Prostate gland (tissue), 2 donors: ENCODE measurements at regions of chr9 and their contacts with region 1.

Region 1: DNA sequence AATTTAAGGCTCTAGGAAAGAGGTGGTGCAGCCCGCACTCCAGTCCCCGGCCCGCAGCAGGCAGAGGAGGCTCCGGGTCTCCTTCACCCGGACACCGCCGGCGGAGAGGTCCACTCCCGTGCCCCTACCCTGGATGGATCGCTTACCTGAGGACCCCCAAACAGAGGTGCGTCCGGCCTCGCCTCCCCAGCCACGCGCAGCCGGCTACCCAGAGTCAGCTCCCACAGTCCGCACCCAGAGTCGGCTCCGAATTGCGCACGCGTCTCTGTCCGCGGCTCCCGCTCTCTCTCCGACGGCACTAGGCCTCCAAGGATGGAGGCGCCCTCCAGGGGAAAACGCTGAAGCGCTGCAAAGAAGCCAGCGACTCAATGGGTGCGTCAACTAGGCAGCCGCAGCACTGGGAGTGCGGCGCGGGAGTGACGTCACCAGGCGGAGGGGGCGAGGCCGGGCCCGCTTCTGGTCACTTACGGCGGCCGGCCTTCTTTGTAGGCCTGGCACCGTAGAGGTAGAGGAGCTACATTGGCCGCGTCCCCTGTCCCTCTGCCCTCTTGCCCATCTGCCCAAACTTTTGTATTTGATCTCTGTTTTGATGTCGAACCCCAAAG is at the start of gene ELP1:
- DNase-seq: peak; percentile 88
- H3K4me3 ChIP-seq: peak within 1 kb of the TSS; percentile 71 to 72
- H3K27ac ChIP-seq: peak within 1 kb of the TSS; percentile 89 to 91
- H3K4me1 ChIP-seq: peaks cover 6% of the 10 kb centered on the region
- H3K27me3 ChIP-seq: no peaks in the 10 kb centered on the region
- CTCF ChIP-seq: peak in 2 of 4 experiments; percentile 13 to 36
- POLR2A ChIP-seq: peak; percentile 43
- total RNA-seq, gene ELP1: 18.4 to 30.3 TPM

Region 2: DNA sequence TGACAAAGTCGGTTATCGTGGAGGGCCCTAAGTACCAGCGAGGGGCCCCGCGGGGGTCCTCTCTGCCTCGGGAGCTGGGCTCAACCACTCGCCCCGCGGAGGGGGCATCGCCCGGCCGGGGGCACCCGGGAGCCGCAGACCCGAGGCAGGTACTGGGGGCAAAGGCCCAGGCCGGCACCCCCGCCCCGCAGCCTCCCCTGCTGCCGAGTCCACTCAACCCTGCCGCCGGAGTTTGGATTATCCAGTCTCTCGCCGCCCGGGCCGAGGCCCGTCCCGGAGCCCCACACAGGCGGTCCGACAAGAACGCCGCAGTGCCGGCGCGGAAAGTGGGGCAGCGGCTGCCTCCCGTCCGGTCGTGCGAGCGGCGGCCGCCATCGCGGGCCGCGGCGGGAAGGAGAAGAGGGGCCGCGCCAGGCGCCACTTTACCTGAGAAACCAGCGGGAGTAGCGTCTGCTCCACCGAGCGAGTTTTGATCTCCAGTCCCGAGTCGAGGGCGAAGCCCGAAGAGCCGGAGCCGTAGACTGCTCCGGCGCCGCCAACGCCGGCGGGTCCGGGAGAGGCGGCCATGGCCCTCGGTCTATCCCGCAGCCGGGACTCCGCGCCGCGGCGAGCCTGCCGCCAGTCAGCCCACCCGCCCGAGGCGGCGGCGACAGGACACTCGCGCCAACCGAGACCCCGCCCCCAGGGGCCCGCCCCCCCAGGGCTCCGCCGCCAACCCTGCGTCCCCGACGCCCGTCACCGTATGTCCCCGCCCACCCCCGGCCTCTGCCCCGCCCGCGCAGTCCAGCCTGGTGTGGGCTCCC is 79.3 kb after region 1 on chr9 and contains the start of gene CTNNAL1:
- intact Hi-C with region 1: loop called (anchors 10 kb)
- DNase-seq: peak; percentile 93
- H3K4me3 ChIP-seq: peak within 1 kb of the TSS; percentile 87
- H3K27ac ChIP-seq: peak within 1 kb of the TSS; percentile 89 to 93
- H3K4me1 ChIP-seq: no peaks in the 10 kb centered on the region
- H3K27me3 ChIP-seq: no peaks in the 10 kb centered on the region
- CTCF ChIP-seq: no peak
- POLR2A ChIP-seq: peak; percentile 88
- total RNA-seq, gene CTNNAL1: 20.2 to 74.6 TPM